ENCODE measurements at regions of chr4 and their contacts with region 1.

Region 1: DNA sequence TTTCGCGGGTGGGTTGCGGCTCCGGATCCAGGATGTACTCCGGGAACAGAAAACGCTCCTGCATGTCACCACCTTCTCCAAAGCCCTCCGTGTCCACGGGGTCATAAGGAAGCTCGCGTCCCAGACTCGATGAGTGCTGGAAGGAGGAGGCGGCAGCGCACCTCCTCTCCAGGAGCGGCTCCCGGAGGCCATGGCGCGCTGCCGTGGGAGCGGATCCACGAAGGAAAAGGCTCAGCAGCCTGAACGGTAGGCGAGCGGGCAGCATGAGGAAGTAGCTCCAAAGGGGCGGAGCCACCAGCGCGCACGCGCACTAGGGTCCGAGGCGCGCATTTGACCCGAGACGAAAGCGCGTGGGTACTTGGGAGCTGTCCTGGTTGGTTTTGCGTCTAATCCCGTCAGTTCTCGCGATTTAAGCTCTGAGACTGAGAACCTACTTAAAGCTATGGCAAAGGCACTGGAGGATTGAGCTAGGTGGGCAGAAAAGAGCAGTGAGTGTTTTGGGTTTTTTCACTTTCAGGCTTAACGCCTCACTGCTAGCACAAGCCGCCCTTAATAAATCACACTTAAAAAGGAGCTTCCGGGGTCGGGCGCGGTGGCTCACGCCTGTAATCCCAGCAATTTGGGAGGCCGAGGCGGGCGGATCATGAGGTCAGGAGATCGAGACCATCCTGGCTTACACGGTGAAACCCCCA is at the start of gene NOA1:
- DNase-seq: peak; percentile 98
- ATAC-seq: peak; percentile 81
- H3K4me3 ChIP-seq: peak within 1 kb of the TSS; percentile 90 to 93 (median 92)
- H3K27ac ChIP-seq: peak within 1 kb of the TSS; percentile 88
- H3K4me1 ChIP-seq: peaks cover 41% of the 10 kb centered on the region
- H3K27me3 ChIP-seq: no peaks in the 10 kb centered on the region; a peak in 1 of 5 replicates
- CTCF ChIP-seq: no peak
- EP300 ChIP-seq: no peak
- POLR2A ChIP-seq: peak; percentile 90 to 98
- RAD21 ChIP-seq: no peak
- total RNA-seq, gene NOA1: 17.3 and 17.9 TPM in 2 replicates

Region 2: GRCh38 chr4:56907489-56908205 is 69.8 kb before region 1 on chr4 and contains the start of gene REST:
- CTCF ChIA-PET with region 1: no interaction called
- POLR2A ChIA-PET with region 1: interaction called, 49 read pairs
- in situ Hi-C with region 1: no loop called
- intact Hi-C with region 1: loop called (anchors 2 kb)
- DNase-seq: peak; percentile 21
- ATAC-seq: peak; percentile 77
- H3K4me3 ChIP-seq: peak within 1 kb of the TSS; percentile 94 to 99 (median 99)
- H3K27ac ChIP-seq: peak within 1 kb of the TSS; percentile 96
- H3K4me1 ChIP-seq: peaks cover 34% of the 10 kb centered on the region
- H3K27me3 ChIP-seq: peaks cover 0 to 12% of the 10 kb centered on the region in 2 experiments; a peak in 1 of 5 replicates
- CTCF ChIP-seq: no peak
- EP300 ChIP-seq: no peak
- POLR2A ChIP-seq: peak; percentile 58 to 66; a peak in 2 of 4 replicates
- RAD21 ChIP-seq: peak; percentile 28; the same call in 1 of the 2 replicates
- total RNA-seq, gene REST: 22.4 and 30.4 TPM in 2 replicates

Region 3: DNA sequence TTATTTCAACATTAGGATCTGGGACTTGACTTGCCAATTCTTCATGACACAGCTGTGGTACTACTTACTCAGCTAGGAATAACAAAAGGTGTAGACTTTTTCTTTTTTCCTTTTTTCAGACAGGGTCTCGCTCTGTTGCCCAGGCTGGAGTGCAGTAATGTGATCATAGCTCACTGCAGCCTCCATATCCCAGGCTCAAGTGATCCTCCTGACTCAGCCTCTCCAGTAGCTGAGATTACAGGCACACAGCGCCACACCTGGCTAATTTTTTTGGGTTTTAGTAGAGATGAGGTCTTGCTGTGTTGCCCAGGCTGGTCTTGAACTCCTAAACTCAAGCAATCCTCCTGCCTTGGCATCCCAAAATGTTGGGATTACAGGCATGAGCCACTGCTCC is 16.4 kb before region 1 on chr4:
- CTCF ChIA-PET with region 1: interaction called, 3 read pairs
- POLR2A ChIA-PET with region 1: interaction called, 5 read pairs
- in situ Hi-C with region 1: no loop called
- intact Hi-C with region 1: loop called (anchors 2 kb)
- DNase-seq: no peak
- ATAC-seq: no peak
- H3K4me3 ChIP-seq: no peak overlapping the region
- H3K27ac ChIP-seq: no peak overlapping the region
- H3K4me1 ChIP-seq: peaks cover 22% of the 10 kb centered on the region
- H3K27me3 ChIP-seq: no peaks in the 10 kb centered on the region
- CTCF ChIP-seq: no peak
- EP300 ChIP-seq: no peak
- POLR2A ChIP-seq: no peak
- RAD21 ChIP-seq: no peak

Region 4: GRCh38 chr4:56990109-56990905 is 12.8 kb after region 1 on chr4:
- CTCF ChIA-PET with region 1: no interaction called
- POLR2A ChIA-PET with region 1: interaction called, 17 read pairs
- in situ Hi-C with region 1: no loop called
- intact Hi-C with region 1: no loop called
- DNase-seq: no peak
- ATAC-seq: no peak
- H3K4me3 ChIP-seq: no peak overlapping the region
- H3K27ac ChIP-seq: no peak overlapping the region
- H3K4me1 ChIP-seq: no peaks in the 10 kb centered on the region
- H3K27me3 ChIP-seq: no peaks in the 10 kb centered on the region
- CTCF ChIP-seq: no peak
- EP300 ChIP-seq: no peak
- POLR2A ChIP-seq: no peak
- RAD21 ChIP-seq: no peak

Region 5: GRCh38 chr4:57081651-57082349 is 104.3 kb after region 1 on chr4:
- CTCF ChIA-PET with region 1: no interaction called
- POLR2A ChIA-PET with region 1: no interaction called
- in situ Hi-C with region 1: no loop called
- intact Hi-C with region 1: no loop called
- DNase-seq: no peak
- ATAC-seq: no peak; the same call in 1 of the 3 replicates
- H3K4me3 ChIP-seq: peak overlapping the region in 1 of 3 experiments; percentile 9; a peak in 2 of 6 replicates
- H3K27ac ChIP-seq: no peak overlapping the region
- H3K4me1 ChIP-seq: peaks cover 40% of the 10 kb centered on the region
- H3K27me3 ChIP-seq: no peaks in the 10 kb centered on the region
- CTCF ChIP-seq: no peak
- EP300 ChIP-seq: no peak
- POLR2A ChIP-seq: no peak
- RAD21 ChIP-seq: no peak

Measured in HepG2 (cell line).